ENCODE measurements at regions of chr3 and their contacts with region 1.

Region 1: GRCh38 chr3:187738331-187739093 is 6.8 kb downstream of the BCL6 start:
- DNase-seq: peak; percentile 90
- H3K4me3 ChIP-seq: peak overlapping the region; percentile 31 to 71 (median 51)
- H3K27ac ChIP-seq: peak overlapping the region; percentile 91 to 99 (median 98)
- H3K4me1 ChIP-seq: peaks cover 0 to 48% (median 46%) of the 10 kb centered on the region in 4 donors
- H3K27me3 ChIP-seq: no peaks in the 10 kb centered on the region
- CTCF ChIP-seq: peak; percentile 64 to 85 (median 69)
- EP300 ChIP-seq: peak; percentile 73
- POLR2A ChIP-seq: peak; percentile 31

Region 2: GRCh38 chr3:187169231-187169960 is 569.1 kb before region 1 on chr3:
- in situ Hi-C with region 1: no loop called
- intact Hi-C with region 1: no loop called
- DNase-seq: no peak
- H3K4me3 ChIP-seq: no peak overlapping the region
- H3K27ac ChIP-seq: no peak overlapping the region
- H3K4me1 ChIP-seq: peaks cover 0 to 7% (median 2%) of the 10 kb centered on the region in 4 donors
- H3K27me3 ChIP-seq: no peaks in the 10 kb centered on the region
- CTCF ChIP-seq: no peak
- EP300 ChIP-seq: no peak
- POLR2A ChIP-seq: no peak

Region 3: GRCh38 chr3:188154014-188154808 is 415.7 kb after region 1 on chr3 and contains the start of gene LPP:
- in situ Hi-C with region 1: loop called in 2 of 4 experiments (anchors 10 to 25 kb)
- intact Hi-C with region 1: loop called (anchors 5 kb)
- DNase-seq: peak; percentile 85
- H3K4me3 ChIP-seq: peak within 1 kb of the TSS; percentile 61 to 87 (median 78)
- H3K27ac ChIP-seq: peak within 1 kb of the TSS; percentile 96 to 98 (median 97)
- H3K4me1 ChIP-seq: peaks cover 44 to 63% (median 57%) of the 10 kb centered on the region in 4 donors
- H3K27me3 ChIP-seq: no peaks in the 10 kb centered on the region
- CTCF ChIP-seq: peak in 1 of 5 experiments; percentile 15
- EP300 ChIP-seq: no peak
- POLR2A ChIP-seq: peak; percentile 68
- total RNA-seq, gene LPP: 207 to 592 (median 406) TPM

Region 4: GRCh38 chr3:188212308-188212969 is 473.9 kb after region 1 on chr3:
- in situ Hi-C with region 1: no loop called
- intact Hi-C with region 1: loop called (anchors 5 kb)
- DNase-seq: no peak
- H3K4me3 ChIP-seq: peak overlapping the region in 3 of 4 donors; percentile 8 to 36 (median 29)
- H3K27ac ChIP-seq: peak overlapping the region; percentile 85 to 92 (median 86)
- H3K4me1 ChIP-seq: peaks cover 26 to 51% (median 49%) of the 10 kb centered on the region in 4 donors
- H3K27me3 ChIP-seq: no peaks in the 10 kb centered on the region
- CTCF ChIP-seq: no peak
- EP300 ChIP-seq: peak; percentile 69
- POLR2A ChIP-seq: peak; percentile 38

Region 5: DNA sequence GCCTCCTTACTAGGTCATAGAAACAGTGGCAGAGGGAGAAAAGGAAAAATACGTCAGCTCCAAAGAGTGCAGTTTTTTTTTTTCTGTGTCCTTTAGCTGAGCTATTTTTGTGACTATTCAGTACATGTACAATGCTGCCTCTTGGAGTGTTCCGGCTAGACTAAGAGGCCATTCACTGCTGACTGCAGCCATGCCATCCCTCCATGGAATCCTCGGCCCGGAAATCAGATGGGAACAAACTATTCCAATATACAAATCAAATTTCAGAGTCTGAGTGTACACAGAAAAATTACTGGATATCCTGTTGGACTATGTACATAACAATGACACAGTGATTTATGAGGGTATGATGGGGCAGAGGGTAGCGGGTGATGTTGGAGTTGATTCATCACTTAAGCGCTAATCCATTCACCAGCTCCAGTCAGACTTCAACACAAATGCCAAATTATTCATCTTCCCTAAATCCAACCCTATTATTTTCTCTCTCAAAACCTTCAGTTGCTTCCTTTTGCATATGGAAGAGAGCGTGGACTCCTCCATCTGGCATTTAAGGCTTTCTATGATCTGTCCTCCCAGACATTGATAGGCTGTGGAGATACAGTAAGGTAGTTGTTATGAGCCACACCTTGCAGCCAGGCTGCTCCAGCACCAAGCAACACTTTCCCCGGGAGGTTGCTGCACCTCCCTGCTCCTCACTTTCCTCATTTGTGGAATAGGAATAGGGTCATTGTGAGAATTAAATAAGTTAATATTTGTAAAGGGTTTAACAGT is 524.6 kb after region 1 on chr3:
- in situ Hi-C with region 1: no loop called
- intact Hi-C with region 1: loop called (anchors 5 kb)
- DNase-seq: no peak
- H3K4me3 ChIP-seq: no peak overlapping the region
- H3K27ac ChIP-seq: peak overlapping the region; percentile 82 to 90 (median 86)
- H3K4me1 ChIP-seq: peaks cover 38 to 98% (median 74%) of the 10 kb centered on the region in 4 donors
- H3K27me3 ChIP-seq: no peaks in the 10 kb centered on the region
- CTCF ChIP-seq: no peak
- EP300 ChIP-seq: peak; percentile 74
- POLR2A ChIP-seq: no peak

Region 6: DNA sequence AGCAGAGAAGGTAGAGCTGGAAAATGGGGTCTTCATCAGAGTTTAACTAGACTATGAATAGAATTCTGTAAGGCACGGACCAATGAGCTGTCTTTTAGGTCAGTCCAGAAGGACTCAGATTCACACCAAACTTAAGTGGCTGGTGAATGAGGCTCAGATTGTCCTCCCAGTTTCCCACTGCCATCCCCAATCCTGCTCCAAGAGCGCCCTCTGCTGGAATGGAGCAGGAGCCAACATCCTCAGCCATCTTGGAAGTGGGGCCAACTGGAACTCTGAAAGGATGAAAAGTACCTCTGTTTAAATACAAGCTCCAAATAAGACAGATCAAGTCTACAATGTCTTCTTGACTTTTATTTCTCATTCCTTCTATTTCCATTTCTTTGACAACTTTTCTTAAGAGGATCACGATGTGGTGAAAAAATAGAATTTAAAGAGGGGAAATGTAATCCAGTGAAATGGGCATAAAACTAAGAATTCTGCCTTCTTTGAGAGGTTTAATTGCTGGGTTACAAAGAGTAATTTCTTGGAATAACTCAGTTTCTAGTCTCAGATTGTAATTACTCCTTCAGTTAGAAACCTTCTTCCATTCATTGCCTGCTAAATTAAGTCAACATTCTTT is 1216.2 kb after region 1 on chr3:
- in situ Hi-C with region 1: loop called (anchors 5 to 10 kb)
- intact Hi-C with region 1: loop called (anchors 2 kb)
- DNase-seq: peak; percentile 87
- H3K4me3 ChIP-seq: no peak overlapping the region
- H3K27ac ChIP-seq: peak overlapping the region in 1 of 4 donors; percentile 13
- H3K4me1 ChIP-seq: peaks cover 2 to 22% (median 18%) of the 10 kb centered on the region in 4 donors
- H3K27me3 ChIP-seq: no peaks in the 10 kb centered on the region
- CTCF ChIP-seq: peak; percentile 88 to 96 (median 93)
- EP300 ChIP-seq: no peak
- POLR2A ChIP-seq: no peak

Region 7: DNA sequence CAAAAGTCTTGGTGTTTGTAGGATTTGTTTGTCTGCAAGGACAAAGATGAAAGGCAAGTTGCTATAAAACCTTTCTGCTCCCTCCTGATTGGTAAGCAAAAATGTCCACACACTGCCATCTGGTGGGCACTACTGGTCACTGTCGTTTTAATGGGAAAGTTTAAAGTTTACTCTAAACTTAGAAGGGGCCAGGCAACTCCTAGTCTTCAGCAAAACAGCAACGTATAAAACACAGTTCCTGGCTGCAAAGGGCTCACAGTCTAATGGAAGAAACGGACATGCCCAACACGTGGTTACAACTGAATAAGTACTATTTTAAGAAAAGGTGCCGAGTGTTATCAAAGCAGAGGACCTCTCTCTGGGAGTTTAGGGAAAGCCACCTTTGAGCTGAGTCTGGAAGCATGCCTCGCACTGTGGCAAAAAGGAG is 1409.6 kb after region 1 on chr3:
- in situ Hi-C with region 1: loop called (anchors 10 to 25 kb)
- intact Hi-C with region 1: no loop called
- DNase-seq: peak; percentile 67
- H3K4me3 ChIP-seq: no peak overlapping the region
- H3K27ac ChIP-seq: no peak overlapping the region
- H3K4me1 ChIP-seq: peaks cover 0 to 7% (median 4%) of the 10 kb centered on the region in 4 donors
- H3K27me3 ChIP-seq: no peaks in the 10 kb centered on the region
- CTCF ChIP-seq: peak; percentile 80 to 83 (median 81)
- EP300 ChIP-seq: no peak
- POLR2A ChIP-seq: no peak

Region 8: GRCh38 chr3:189157232-189158007 is 1418.9 kb after region 1 on chr3:
- in situ Hi-C with region 1: loop called in 2 of 4 experiments (anchors 10 kb)
- intact Hi-C with region 1: no loop called
- DNase-seq: no peak
- H3K4me3 ChIP-seq: no peak overlapping the region
- H3K27ac ChIP-seq: no peak overlapping the region
- H3K4me1 ChIP-seq: peaks cover 0 to 11% (median 2%) of the 10 kb centered on the region in 4 donors
- H3K27me3 ChIP-seq: no peaks in the 10 kb centered on the region
- CTCF ChIP-seq: no peak
- EP300 ChIP-seq: no peak
- POLR2A ChIP-seq: no peak